ENCODE measurements at regions of chr2 and their contacts with region 1.

Region 1: DNA sequence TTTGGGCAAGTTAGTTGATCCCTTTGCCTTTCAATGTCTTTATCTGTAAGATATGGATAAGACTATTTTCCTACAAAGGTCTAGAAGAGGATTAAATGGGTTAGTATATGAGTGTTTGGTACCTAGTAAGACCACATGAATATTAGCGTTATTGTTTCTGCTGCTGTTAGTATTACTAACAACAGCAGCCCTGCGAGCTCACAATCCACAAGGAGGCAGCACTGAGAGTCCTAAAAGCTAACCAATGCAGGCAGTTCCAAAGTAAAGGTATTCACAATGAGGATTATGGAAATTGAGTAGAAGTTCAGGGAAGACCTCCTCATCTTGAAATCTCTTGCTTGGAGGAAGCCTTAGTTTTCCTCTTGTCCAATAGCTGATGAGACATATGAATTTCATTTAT is 248.9 kb downstream of the TDRD15 start:
- DNase-seq: peak; percentile 12
- CTCF ChIP-seq: peak; percentile 35

Region 2: DNA sequence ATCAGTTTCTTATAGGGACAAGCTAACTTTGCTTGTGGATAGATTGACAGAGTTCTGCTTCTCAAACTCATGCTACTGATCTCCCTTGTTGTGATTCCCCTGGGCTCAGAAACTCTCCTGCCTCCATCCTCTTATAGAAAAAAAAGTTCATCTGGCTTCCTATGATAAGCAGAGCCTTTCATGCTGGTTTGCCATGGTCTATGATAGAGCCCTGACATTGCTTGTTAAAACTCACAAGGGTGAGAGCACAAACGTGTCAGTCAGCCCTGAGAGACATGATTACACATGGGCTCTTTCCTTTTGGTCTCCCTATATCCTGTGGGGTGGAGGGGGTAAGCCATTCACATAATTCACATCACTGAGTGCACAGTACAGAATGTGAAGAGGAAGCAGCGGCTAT is 127.1 kb before region 1 on chr2:
- CTCF ChIA-PET with region 1: no interaction called
- POLR2A ChIA-PET with region 1: no interaction called
- DNase-seq: no peak
- CTCF ChIP-seq: no peak

Region 3: GRCh38 chr2:21270708-21271122 is 101.9 kb before region 1 on chr2:
- CTCF ChIA-PET with region 1: no interaction called
- POLR2A ChIA-PET with region 1: no interaction called
- DNase-seq: no peak
- CTCF ChIP-seq: no peak

Region 4: GRCh38 chr2:21382701-21383520 is 10.3 kb after region 1 on chr2:
- CTCF ChIA-PET with region 1: interaction called, 10 read pairs
- POLR2A ChIA-PET with region 1: no interaction called
- DNase-seq: no peak
- CTCF ChIP-seq: no peak